ENCODE measurements at regions of chr16 and their contacts with region 1.

Region 1: GRCh38 chr16:24075931-24076716 is 180.0 kb upstream of the CACNG3 start:
- DNase-seq: no peak
- H3K4me3 ChIP-seq: no peak overlapping the region
- H3K27ac ChIP-seq: no peak overlapping the region
- H3K4me1 ChIP-seq: no peaks in the 10 kb centered on the region
- H3K27me3 ChIP-seq: no peaks in the 10 kb centered on the region
- CTCF ChIP-seq: no peak
- POLR2A ChIP-seq: no peak

Region 2: DNA sequence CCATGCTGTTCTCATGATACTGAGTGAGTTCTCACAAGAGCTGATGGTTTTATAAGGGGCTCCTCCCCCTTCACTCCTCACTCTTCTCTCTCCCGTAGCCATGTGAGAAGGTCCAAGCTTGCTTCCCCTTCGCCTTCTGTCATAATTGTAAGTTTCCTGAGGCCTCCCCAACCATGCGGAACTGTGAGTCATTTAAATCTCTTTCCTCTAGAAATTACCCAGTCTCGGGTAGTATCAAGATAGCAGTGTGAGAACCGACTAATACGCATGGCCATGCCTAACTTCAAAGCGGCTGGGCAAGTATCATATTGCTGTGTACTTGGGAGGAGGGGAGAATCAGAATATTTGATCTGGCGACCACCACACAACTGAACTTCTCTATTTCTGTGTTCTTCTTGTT is 152.0 kb before region 1 on chr16:
- CTCF ChIA-PET with region 1: no interaction called
- POLR2A ChIA-PET with region 1: no interaction called
- dilution Hi-C with region 1: no loop called
- intact Hi-C with region 1: no loop called
- DNase-seq: no peak
- H3K4me3 ChIP-seq: no peak overlapping the region
- H3K27ac ChIP-seq: no peak overlapping the region
- H3K4me1 ChIP-seq: no peaks in the 10 kb centered on the region
- H3K27me3 ChIP-seq: no peaks in the 10 kb centered on the region
- CTCF ChIP-seq: no peak
- POLR2A ChIP-seq: no peak

Region 3: GRCh38 chr16:24228514-24228913 is 152.4 kb after region 1 on chr16:
- CTCF ChIA-PET with region 1: interaction called, 5 read pairs
- POLR2A ChIA-PET with region 1: no interaction called
- dilution Hi-C with region 1: loop called (anchors 25 kb)
- intact Hi-C with region 1: no loop called
- DNase-seq: no peak
- H3K4me3 ChIP-seq: no peak overlapping the region
- H3K27ac ChIP-seq: no peak overlapping the region
- H3K4me1 ChIP-seq: no peaks in the 10 kb centered on the region
- H3K27me3 ChIP-seq: no peaks in the 10 kb centered on the region
- CTCF ChIP-seq: no peak
- POLR2A ChIP-seq: no peak

Region 4: GRCh38 chr16:24286721-24287420 is 210.7 kb after region 1 on chr16:
- CTCF ChIA-PET with region 1: no interaction called
- POLR2A ChIA-PET with region 1: no interaction called
- dilution Hi-C with region 1: no loop called
- intact Hi-C with region 1: no loop called
- DNase-seq: no peak
- H3K4me3 ChIP-seq: no peak overlapping the region
- H3K27ac ChIP-seq: no peak overlapping the region
- H3K4me1 ChIP-seq: no peaks in the 10 kb centered on the region
- H3K27me3 ChIP-seq: no peaks in the 10 kb centered on the region
- CTCF ChIP-seq: no peak
- POLR2A ChIP-seq: no peak